Gastrocnemius medialis (tissue), 4 donors: ENCODE measurements at regions of chr17 and their contacts with region 1.

Region 1: GRCh38 chr17:57243171-57243948 is 13.0 kb upstream of the MSI2 start:
- DNase-seq: peak; percentile 38 to 58
- ATAC-seq: peak; percentile 73 to 85
- H3K4me3 ChIP-seq: no peak overlapping the region
- H3K27ac ChIP-seq: peak overlapping the region; percentile 76 to 83 (median 79)
- H3K4me1 ChIP-seq: peaks cover 12 to 13% of the 10 kb centered on the region in 2 donors
- H3K27me3 ChIP-seq: no peaks in the 10 kb centered on the region
- CTCF ChIP-seq: peak; percentile 96 to 99 (median 98)
- POLR2A ChIP-seq: no peak

Region 2: GRCh38 chr17:57130761-57131461 is 112.4 kb before region 1 on chr17:
- in situ Hi-C with region 1: no loop called
- intact Hi-C with region 1: loop called (anchors 5 kb)
- DNase-seq: peak; percentile 67 to 79
- ATAC-seq: peak; percentile 94 to 98
- H3K4me3 ChIP-seq: peak overlapping the region in 2 of 4 donors; percentile 15 to 25
- H3K27ac ChIP-seq: no peak overlapping the region
- H3K4me1 ChIP-seq: peaks cover under 1 to 2% of the 10 kb centered on the region in 2 donors
- H3K27me3 ChIP-seq: no peaks in the 10 kb centered on the region
- CTCF ChIP-seq: peak; percentile 60 to 95 (median 78)
- POLR2A ChIP-seq: no peak

Region 3: GRCh38 chr17:57311281-57312216 is 68.2 kb after region 1 on chr17:
- in situ Hi-C with region 1: no loop called
- intact Hi-C with region 1: no loop called
- DNase-seq: no peak
- ATAC-seq: no peak
- H3K4me3 ChIP-seq: no peak overlapping the region
- H3K27ac ChIP-seq: no peak overlapping the region
- H3K4me1 ChIP-seq: peaks cover 52 to 54% of the 10 kb centered on the region in 2 donors
- H3K27me3 ChIP-seq: no peaks in the 10 kb centered on the region
- CTCF ChIP-seq: no peak
- POLR2A ChIP-seq: no peak

Region 4: GRCh38 chr17:57379237-57379894 is 136.0 kb after region 1 on chr17:
- in situ Hi-C with region 1: no loop called
- intact Hi-C with region 1: no loop called
- DNase-seq: no peak
- ATAC-seq: peak; percentile 48 to 72
- H3K4me3 ChIP-seq: no peak overlapping the region
- H3K27ac ChIP-seq: peak overlapping the region; percentile 63 to 81 (median 76)
- H3K4me1 ChIP-seq: peaks cover 30 to 35% of the 10 kb centered on the region in 2 donors
- H3K27me3 ChIP-seq: no peaks in the 10 kb centered on the region
- CTCF ChIP-seq: no peak
- POLR2A ChIP-seq: no peak

Region 5: DNA sequence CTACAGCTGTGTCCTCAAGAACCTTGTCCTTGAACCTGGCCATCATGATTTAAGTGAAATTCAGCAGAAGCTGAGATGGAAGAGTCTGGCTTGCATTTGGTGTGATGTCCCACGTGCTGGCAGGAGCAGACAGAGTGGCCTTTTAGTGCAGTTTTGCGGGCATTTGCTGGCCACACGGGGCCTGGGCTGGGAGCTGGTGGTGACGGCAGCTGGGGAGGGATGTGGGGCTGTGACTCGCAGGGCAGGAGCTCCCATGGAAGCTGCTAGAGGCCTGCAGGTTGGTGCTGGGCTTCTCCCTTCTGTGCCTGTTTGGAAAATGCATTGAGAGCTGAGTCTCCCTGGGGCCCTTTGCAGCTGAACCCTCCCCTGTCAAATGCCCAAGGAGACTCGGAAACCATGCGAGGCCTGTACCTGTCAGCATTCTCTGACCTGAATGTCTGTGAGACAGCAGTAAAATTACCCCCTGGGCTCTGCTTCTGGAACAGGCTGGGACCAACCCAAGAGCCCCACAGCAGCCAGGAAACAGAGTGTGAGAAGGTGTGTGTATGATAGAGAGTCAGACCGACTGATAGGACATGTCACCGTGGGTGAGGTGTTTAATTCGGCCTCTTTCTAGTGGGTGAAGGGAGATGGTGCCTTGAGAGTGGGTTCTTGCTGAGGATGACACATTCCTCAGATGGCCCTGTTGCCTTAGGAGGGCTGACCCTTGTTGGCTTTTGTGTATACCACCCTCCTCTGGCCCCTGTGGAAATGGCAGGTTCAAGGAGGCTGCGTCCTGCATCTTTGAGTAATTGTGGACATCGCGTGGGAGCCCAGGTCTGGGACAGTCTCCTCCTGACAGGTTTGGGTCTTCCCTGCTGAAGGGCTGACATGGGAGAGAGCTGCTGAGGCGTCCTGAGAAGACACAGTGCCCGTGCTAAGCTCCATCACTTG is 158.5 kb after region 1 on chr17:
- in situ Hi-C with region 1: no loop called
- intact Hi-C with region 1: loop called (anchors 5 kb)
- DNase-seq: peak in 1 of 2 donors; percentile 41
- ATAC-seq: peak in 1 of 2 donors; percentile 32
- H3K4me3 ChIP-seq: no peak overlapping the region
- H3K27ac ChIP-seq: peak overlapping the region; percentile 12 to 82 (median 67)
- H3K4me1 ChIP-seq: peaks cover 43 to 63% of the 10 kb centered on the region in 2 donors
- H3K27me3 ChIP-seq: no peaks in the 10 kb centered on the region
- CTCF ChIP-seq: peak in 1 of 5 experiments; percentile 13
- POLR2A ChIP-seq: no peak

Region 6: DNA sequence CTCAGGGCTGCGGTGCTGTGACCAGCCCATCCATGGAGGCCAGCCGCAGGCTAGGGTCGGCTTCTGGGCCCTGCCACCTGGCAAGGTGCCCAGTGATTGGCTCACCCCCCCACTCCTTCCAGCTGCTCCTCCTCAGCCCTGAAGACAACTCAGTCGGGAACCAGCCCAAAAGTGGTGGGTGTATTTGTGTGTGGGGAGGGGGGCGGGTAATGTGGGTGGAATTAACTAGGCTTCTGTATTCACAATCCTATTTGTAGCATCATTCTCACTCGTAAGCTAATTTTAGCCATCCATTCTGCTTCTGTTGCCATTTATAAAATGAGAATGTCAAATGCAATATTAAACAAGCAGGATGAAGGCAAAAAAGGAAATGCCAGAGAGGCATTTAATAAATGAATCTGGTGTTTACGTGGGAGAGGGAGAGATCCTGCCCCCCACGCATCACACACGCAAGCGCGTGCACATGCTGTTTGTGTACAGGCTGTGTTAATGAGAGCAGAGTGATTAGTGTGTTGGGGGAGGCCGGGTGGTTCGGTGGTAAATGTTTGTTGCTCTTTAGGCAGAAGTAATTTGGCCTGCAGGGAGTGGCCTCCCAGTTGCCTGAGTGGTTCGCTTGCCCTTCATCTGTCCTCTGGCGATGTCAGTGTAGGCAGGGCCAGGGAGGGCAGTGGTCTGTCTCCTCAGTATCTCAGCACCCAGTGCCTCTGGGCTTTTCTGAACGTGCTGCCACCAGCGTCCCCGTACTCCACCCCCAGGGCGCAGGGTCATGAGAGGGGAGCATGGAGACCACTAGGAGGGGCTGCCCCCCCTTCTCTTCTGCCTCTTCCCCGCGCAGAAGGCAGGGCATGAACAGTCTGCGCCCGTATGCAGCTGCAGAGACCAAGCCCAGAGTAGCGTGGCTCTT is 361.7 kb after region 1 on chr17:
- in situ Hi-C with region 1: no loop called
- intact Hi-C with region 1: loop called (anchors 5 kb)
- DNase-seq: peak; percentile 46 to 64
- ATAC-seq: peak; percentile 18 to 66
- H3K4me3 ChIP-seq: peak overlapping the region in 1 of 4 donors; percentile 2
- H3K27ac ChIP-seq: peak overlapping the region; percentile 79 to 83 (median 80)
- H3K4me1 ChIP-seq: peaks cover 41 to 56% of the 10 kb centered on the region in 2 donors
- H3K27me3 ChIP-seq: no peaks in the 10 kb centered on the region
- CTCF ChIP-seq: no peak
- POLR2A ChIP-seq: no peak

Region 7: GRCh38 chr17:57671667-57672632 is 428.6 kb after region 1 on chr17:
- in situ Hi-C with region 1: loop called in 1 of 4 experiments (anchors 5 kb)
- intact Hi-C with region 1: loop called (anchors 2 kb)
- DNase-seq: peak; percentile 34 to 60
- ATAC-seq: peak; percentile 64 to 84
- H3K4me3 ChIP-seq: no peak overlapping the region
- H3K27ac ChIP-seq: peak overlapping the region in 1 of 4 donors; percentile 19
- H3K4me1 ChIP-seq: no peaks in the 10 kb centered on the region
- H3K27me3 ChIP-seq: no peaks in the 10 kb centered on the region
- CTCF ChIP-seq: peak; percentile 82 to 94 (median 88)
- POLR2A ChIP-seq: no peak

Region 8: GRCh38 chr17:57833179-57833939 is 590.0 kb after region 1 on chr17:
- in situ Hi-C with region 1: loop called in 2 of 4 experiments (anchors 10 to 25 kb)
- intact Hi-C with region 1: loop called (anchors 2 kb)
- DNase-seq: peak; percentile 48 to 77
- ATAC-seq: peak; percentile 81 to 82
- H3K4me3 ChIP-seq: peak overlapping the region; percentile 28 to 57 (median 55)
- H3K27ac ChIP-seq: peak overlapping the region; percentile 71 to 92 (median 88)
- H3K4me1 ChIP-seq: peaks cover 37 to 52% of the 10 kb centered on the region in 2 donors
- H3K27me3 ChIP-seq: no peaks in the 10 kb centered on the region
- CTCF ChIP-seq: peak; percentile 86 to 93 (median 90)
- POLR2A ChIP-seq: peak; percentile 18 to 29

Region 9: GRCh38 chr17:57855391-57856035 is 612.2 kb after region 1 on chr17:
- in situ Hi-C with region 1: no loop called
- intact Hi-C with region 1: no loop called
- DNase-seq: no peak
- ATAC-seq: no peak
- H3K4me3 ChIP-seq: no peak overlapping the region
- H3K27ac ChIP-seq: peak overlapping the region; percentile 91 to 98 (median 96)
- H3K4me1 ChIP-seq: peaks cover 38 to 46% of the 10 kb centered on the region in 2 donors
- H3K27me3 ChIP-seq: no peaks in the 10 kb centered on the region
- CTCF ChIP-seq: no peak
- POLR2A ChIP-seq: no peak

Region 10: DNA sequence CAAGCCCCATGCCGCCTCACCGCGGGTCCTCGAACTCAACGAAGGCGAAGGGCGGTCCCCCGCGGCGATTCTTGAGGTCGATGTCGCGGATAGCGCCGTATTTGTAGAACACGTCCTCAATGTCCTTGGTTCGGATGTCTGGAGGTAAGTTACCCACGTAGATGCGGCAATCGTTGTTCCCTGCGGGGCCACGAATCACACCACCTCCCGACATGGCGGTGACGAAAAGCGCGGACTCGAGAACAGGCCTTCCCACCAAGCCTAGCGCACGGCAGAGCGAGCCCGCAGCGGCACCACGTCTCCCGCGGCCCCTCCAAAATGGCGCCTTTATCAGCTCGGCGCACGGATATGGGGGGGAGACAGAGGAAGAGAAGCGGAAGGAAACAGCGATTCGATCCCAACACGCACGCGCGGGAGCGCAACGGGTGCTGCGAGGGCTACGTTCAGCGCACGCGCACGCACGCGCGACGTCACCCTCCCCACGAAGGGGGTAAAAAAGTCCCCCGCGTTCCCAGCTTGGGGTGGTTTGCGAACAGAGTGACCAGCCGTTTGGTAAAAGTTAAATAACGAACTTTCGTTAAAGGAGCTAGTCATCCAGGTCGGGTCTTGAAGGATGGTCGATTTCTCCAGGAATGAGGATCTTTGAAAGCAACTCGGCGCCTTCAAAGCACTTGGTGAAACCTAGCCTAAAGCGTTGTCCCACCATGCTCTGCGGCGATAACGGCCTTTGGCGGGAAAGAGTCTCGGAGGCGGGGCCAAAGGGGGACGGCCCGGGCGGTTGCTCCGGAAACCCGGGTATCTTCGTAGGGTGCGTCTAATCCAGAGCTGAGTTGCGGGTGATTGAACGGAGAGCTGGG is 763.8 kb after region 1 on chr17 and contains the start of gene SRSF1:
- in situ Hi-C with region 1: no loop called
- intact Hi-C with region 1: loop called (anchors 5 kb)
- DNase-seq: peak; percentile 95 to 96
- ATAC-seq: peak; percentile 90 to 93
- H3K4me3 ChIP-seq: peak within 1 kb of the TSS; percentile 91 to 98 (median 97)
- H3K27ac ChIP-seq: peak within 1 kb of the TSS; percentile 96 to 100 (median 100)
- H3K4me1 ChIP-seq: peaks cover 47 to 48% of the 10 kb centered on the region in 2 donors
- H3K27me3 ChIP-seq: no peaks in the 10 kb centered on the region
- CTCF ChIP-seq: peak in 1 of 5 experiments; percentile 25
- POLR2A ChIP-seq: peak; percentile 97 to 98
- total RNA-seq, gene SRSF1: 69.4 to 85.4 (median 82.2) TPM